Aorta (tissue), 5 donors: ENCODE measurements at regions of chr9 and their contacts with region 1.

Region 1: DNA sequence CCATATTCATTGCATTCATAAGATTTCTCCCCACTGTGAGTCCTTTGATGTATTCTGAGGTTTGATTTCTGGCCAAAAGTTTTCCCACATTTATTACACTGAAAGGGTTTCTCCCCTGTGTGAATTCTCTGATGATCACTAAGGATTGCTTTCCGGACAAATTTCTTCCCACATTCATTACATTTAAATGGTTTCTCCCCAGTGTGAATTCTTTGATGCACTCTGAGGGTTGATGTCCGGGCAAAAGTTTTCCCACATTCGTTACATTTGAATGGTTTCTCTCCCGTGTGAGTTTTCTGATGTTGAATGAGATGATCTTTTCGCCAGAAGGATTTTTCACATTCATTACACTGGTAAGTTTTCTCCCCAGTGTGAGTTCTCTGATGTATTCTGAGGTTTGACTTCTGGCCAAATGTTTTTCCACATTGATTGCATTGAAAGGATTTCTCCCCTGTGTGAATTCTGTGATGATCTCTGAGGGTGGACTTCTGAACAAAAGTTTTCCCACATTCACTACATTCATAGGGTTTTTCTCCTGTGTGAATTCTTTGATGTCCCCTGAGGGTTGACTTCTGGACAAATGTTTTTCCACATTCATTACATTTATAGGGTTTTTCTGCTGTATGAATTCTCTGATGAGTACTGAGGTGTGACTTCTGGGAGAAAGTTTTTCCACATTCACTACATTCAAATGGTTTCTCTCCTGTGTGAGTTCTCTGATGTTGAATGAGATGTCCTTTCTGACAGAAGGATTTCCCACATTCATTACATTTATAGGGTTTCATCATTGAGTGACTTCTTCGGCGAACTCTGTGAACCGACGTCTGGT is 18.8 kb downstream of the ZNF510 start:
- DNase-seq: no peak
- ATAC-seq: no peak
- H3K4me3 ChIP-seq: no peak overlapping the region
- H3K27ac ChIP-seq: no peak overlapping the region
- H3K4me1 ChIP-seq: no peaks in the 10 kb centered on the region
- H3K27me3 ChIP-seq: no peaks in the 10 kb centered on the region

Region 2: GRCh38 chr9:96636368-96636767 is 122.7 kb before region 1 on chr9:
- intact Hi-C with region 1: no loop called
- DNase-seq: no peak
- ATAC-seq: no peak
- H3K4me3 ChIP-seq: no peak overlapping the region
- H3K27ac ChIP-seq: no peak overlapping the region
- H3K4me1 ChIP-seq: no peaks in the 10 kb centered on the region
- H3K27me3 ChIP-seq: no peaks in the 10 kb centered on the region

Region 3: GRCh38 chr9:96818535-96818934 is 59.5 kb after region 1 on chr9:
- intact Hi-C with region 1: loop called in 1 of 2 experiments (anchors 10 kb)
- DNase-seq: no peak
- ATAC-seq: no peak
- H3K4me3 ChIP-seq: peak overlapping the region in 1 of 2 donors; percentile 14
- H3K27ac ChIP-seq: no peak overlapping the region
- H3K4me1 ChIP-seq: no peaks in the 10 kb centered on the region
- H3K27me3 ChIP-seq: no peaks in the 10 kb centered on the region